ENCODE measurements at regions of chr20 and their contacts with region 1.

Region 1: GRCh38 chr20:51456511-51457509 is 85.7 kb downstream of the NFATC2 start:
- DNase-seq: peak; percentile 92
- H3K4me3 ChIP-seq: no peak overlapping the region
- CTCF ChIP-seq: no peak

Region 2: DNA sequence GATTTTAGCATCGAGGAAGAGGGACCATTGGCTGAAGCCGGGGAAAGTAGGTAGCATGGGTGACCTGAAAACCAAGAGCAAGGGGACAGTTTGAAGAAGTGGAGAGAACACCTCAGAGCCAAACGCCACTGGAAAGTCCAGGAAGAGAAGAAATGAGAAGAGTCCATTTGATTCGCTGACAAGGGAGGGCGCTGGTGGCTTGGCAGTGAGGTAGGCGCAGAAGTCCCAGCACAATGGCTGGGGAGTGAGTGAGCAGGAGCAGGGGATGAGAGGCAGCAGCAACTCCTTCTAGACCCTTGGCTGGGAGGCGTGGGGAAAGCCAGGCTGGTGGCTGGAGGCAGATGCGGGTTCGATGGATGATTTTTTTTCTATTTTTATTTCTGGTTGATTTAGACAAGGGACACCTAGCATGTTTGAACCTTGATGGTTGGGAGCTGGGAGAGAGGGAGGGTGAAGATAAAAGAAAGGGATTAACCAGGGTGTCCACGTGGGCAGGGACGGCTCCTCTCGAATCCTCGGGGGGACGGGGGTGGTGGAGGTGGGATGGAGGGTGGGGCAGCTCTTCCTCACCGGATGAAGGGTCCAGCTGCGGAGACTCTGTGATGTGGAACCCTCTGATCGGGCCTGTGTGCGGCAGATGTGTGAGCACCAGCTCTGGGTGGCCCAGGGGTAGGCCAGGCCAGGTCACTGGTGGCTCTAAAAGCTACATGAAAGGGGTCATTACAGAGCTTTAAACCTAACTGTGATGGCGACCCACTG is 78.5 kb before region 1 on chr20:
- in situ Hi-C with region 1: no loop called
- DNase-seq: no peak
- H3K4me3 ChIP-seq: no peak overlapping the region
- CTCF ChIP-seq: no peak

Region 3: DNA sequence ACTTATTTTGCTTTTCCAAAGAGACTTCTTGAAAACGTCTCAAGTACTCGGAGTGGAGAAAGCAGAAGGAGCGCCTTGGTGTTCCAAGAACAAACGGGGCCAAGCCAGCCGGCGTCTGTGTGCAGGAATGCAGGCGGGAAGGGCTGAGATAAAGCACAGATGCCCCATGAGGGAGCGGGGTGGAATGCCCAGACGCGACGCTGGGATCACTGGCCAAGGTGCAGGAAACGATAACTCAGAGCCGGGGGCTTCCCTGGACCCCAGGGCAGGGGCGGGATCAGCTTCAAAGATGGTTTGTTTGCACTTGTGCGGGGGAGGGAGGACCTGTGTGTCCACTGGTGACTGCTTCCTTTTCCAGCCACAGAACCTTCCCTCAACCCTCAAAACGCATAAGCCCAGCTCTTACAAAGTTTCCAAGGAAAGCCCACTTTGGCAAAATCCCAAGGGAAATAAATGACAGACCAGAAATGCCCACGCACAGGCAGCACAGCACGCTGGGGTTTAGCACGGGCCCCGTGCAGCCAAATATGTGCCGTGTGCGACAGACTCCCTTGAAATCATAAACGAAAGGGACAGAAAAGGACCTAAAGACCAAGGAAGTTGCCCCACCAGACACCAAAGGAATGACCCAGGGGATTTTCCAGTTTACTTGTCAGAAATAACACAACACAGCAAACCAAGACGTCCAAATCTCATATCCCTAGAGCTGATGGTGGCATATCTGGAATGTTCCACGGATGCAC is 28.2 kb before region 1 on chr20:
- in situ Hi-C with region 1: no loop called
- DNase-seq: no peak
- H3K4me3 ChIP-seq: no peak overlapping the region
- CTCF ChIP-seq: no peak

Region 4: GRCh38 chr20:51500311-51500710 is 43.5 kb after region 1 on chr20:
- in situ Hi-C with region 1: loop called (anchors 5 kb)
- DNase-seq: no peak
- H3K4me3 ChIP-seq: no peak overlapping the region
- CTCF ChIP-seq: no peak

Region 5: DNA sequence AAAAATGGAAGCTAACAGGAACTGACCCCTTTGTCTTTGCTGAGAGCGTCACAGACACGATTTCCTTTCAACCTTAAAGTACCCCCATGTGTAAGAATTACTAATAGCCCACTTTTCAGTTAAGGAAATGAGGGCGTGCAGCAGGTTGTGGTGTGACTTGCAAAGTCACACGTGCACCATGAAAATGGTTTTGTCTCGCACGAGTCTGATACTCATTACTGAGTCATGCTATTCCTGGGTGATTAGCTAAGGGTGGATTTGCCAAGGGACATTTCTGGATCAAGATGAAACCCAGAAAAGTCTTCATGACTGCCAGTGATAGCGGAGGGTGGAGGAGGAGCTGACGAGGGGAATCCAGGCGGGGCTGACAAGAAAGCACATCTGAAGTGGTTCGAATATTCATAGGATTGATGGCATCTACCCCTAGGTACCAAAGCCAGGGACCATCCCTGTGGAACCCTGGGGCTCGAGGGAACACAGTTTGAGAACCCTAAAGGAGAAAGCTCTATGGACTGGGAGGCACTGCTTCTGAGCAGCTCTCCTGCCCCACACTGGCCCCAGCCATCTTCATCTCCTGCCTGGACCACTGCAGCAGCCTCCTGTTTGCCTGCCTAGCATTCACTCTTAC is 97.8 kb after region 1 on chr20:
- in situ Hi-C with region 1: no loop called
- DNase-seq: no peak
- H3K4me3 ChIP-seq: no peak overlapping the region
- CTCF ChIP-seq: no peak